B cell (primary cell): ENCODE measurements at regions of chr3 and their contacts with region 1.

Region 1: GRCh38 chr3:16290007-16290826 is 25.2 kb downstream of the OXNAD1 start:
- DNase-seq: peak; percentile 69
- ATAC-seq: peak; percentile 63
- H3K4me3 ChIP-seq: no peak overlapping the region
- H3K4me3 Mint-ChIP-seq: no peak overlapping the region
- H3K27ac ChIP-seq: peak overlapping the region in 1 of 2 donors; percentile 39
- H3K27ac Mint-ChIP-seq: no peak overlapping the region
- H3K4me1 ChIP-seq: peaks cover 23 to 29% of the 10 kb centered on the region in 2 donors
- H3K4me1 Mint-ChIP-seq: peaks cover 34% of the 10 kb centered on the region
- H3K27me3 ChIP-seq: no peaks in the 10 kb centered on the region
- H3K27me3 Mint-ChIP-seq: no peaks in the 10 kb centered on the region
- CTCF ChIP-seq: peak; percentile 96

Region 2: DNA sequence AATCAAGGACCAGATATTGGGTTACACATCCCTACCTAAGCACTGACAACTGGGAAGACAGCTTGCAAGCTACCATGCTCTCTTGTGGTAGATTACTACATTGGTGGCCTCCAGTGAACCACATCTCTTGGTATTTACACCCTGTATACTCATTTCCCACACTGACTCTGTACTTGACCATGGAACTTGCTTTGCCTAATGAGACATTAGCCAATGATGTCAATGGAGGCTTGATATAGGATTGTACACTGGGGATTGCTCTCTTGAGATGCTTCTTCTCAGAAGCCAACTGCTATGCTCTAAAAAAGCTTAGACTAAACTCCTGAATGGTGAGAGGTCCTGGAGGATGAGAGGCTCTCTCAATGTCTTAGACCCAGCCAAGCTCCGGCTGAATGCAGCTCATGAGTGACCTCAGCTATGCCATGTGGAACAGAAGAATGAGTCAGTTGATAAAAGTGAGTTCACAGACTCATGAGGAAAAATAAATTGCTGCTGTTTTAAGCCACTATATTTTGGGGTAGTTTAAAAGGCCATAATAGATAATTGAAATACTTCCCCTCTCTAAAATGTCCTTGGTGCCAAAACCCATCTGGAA is 177.2 kb before region 1 on chr3:
- CTCF ChIA-PET with region 1: no interaction called
- POLR2A ChIA-PET with region 1: no interaction called
- intact Hi-C with region 1: no loop called
- DNase-seq: no peak
- ATAC-seq: no peak
- H3K4me3 ChIP-seq: no peak overlapping the region
- H3K4me3 Mint-ChIP-seq: no peak overlapping the region
- H3K27ac ChIP-seq: no peak overlapping the region
- H3K27ac Mint-ChIP-seq: no peak overlapping the region
- H3K4me1 ChIP-seq: no peaks in the 10 kb centered on the region
- H3K4me1 Mint-ChIP-seq: no peaks in the 10 kb centered on the region
- H3K27me3 ChIP-seq: no peaks in the 10 kb centered on the region
- H3K27me3 Mint-ChIP-seq: peaks cover 3% of the 10 kb centered on the region
- CTCF ChIP-seq: no peak

Region 3: DNA sequence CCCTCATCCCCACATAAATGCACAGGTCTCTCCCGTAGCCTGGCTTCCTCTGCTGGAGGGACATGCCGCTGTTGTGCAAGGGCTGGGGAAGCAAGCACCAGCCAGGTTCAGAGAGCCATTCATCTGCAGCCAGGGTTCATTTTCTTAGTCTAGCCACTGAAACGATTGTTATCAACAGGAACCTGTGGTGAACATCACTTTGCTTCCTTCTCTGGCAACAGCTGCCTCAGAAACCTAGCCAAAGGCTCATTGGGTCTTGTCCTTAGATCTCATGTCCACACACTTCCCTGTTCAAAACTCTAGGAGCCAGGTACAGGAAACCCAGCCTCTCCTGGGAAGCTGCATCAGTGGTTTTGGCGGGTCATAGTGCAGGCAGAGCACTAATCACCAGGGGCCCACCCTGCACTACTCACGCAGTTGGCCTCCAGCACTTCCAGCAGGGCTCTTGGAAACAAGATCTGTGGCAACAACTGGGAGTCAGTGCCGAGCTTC is 21.8 kb after region 1 on chr3:
- CTCF ChIA-PET with region 1: interaction called, 26 read pairs
- POLR2A ChIA-PET with region 1: no interaction called
- intact Hi-C with region 1: no loop called
- DNase-seq: peak; percentile 61
- ATAC-seq: peak; percentile 68
- H3K4me3 ChIP-seq: no peak overlapping the region
- H3K4me3 Mint-ChIP-seq: peak overlapping the region; percentile 42
- H3K27ac ChIP-seq: peak overlapping the region; percentile 51 to 68
- H3K27ac Mint-ChIP-seq: peak overlapping the region; percentile 88
- H3K4me1 ChIP-seq: peaks cover 14 to 18% of the 10 kb centered on the region in 2 donors
- H3K4me1 Mint-ChIP-seq: peaks cover 22% of the 10 kb centered on the region
- H3K27me3 ChIP-seq: no peaks in the 10 kb centered on the region
- H3K27me3 Mint-ChIP-seq: no peaks in the 10 kb centered on the region
- CTCF ChIP-seq: no peak

Region 4: GRCh38 chr3:16433701-16434151 is 143.5 kb after region 1 on chr3:
- CTCF ChIA-PET with region 1: interaction called, 3 read pairs
- POLR2A ChIA-PET with region 1: no interaction called
- intact Hi-C with region 1: loop called (anchors 5 kb)
- DNase-seq: peak; percentile 84
- ATAC-seq: peak; percentile 70
- H3K4me3 ChIP-seq: no peak overlapping the region
- H3K4me3 Mint-ChIP-seq: peak overlapping the region; percentile 84
- H3K27ac ChIP-seq: peak overlapping the region in 1 of 2 donors; percentile 3
- H3K27ac Mint-ChIP-seq: peak overlapping the region; percentile 85
- H3K4me1 ChIP-seq: peaks cover 45 to 51% of the 10 kb centered on the region in 2 donors
- H3K4me1 Mint-ChIP-seq: peaks cover 56% of the 10 kb centered on the region
- H3K27me3 ChIP-seq: peaks cover 0 to 5% (median 0%) of the 10 kb centered on the region in 4 experiments
- H3K27me3 Mint-ChIP-seq: peaks cover 6% of the 10 kb centered on the region
- CTCF ChIP-seq: no peak

Region 5: GRCh38 chr3:16523778-16524177 is 233.6 kb after region 1 on chr3:
- CTCF ChIA-PET with region 1: interaction called, 70 read pairs
- POLR2A ChIA-PET with region 1: no interaction called
- intact Hi-C with region 1: no loop called
- DNase-seq: no peak
- ATAC-seq: no peak
- H3K4me3 ChIP-seq: no peak overlapping the region
- H3K4me3 Mint-ChIP-seq: no peak overlapping the region
- H3K27ac ChIP-seq: no peak overlapping the region
- H3K27ac Mint-ChIP-seq: no peak overlapping the region
- H3K4me1 ChIP-seq: peaks cover 53 to 59% of the 10 kb centered on the region in 2 donors
- H3K4me1 Mint-ChIP-seq: peaks cover 55% of the 10 kb centered on the region
- H3K27me3 ChIP-seq: no peaks in the 10 kb centered on the region
- H3K27me3 Mint-ChIP-seq: no peaks in the 10 kb centered on the region
- CTCF ChIP-seq: no peak

Region 6: GRCh38 chr3:16545413-16546185 is 255.4 kb after region 1 on chr3:
- CTCF ChIA-PET with region 1: interaction called, 220 read pairs
- POLR2A ChIA-PET with region 1: interaction called, 4 read pairs
- intact Hi-C with region 1: loop called (anchors 1 kb)
- DNase-seq: no peak
- ATAC-seq: no peak
- H3K4me3 ChIP-seq: no peak overlapping the region
- H3K4me3 Mint-ChIP-seq: no peak overlapping the region
- H3K27ac ChIP-seq: no peak overlapping the region
- H3K27ac Mint-ChIP-seq: no peak overlapping the region
- H3K4me1 ChIP-seq: peaks cover 0 to 2% of the 10 kb centered on the region in 2 donors
- H3K4me1 Mint-ChIP-seq: no peaks in the 10 kb centered on the region
- H3K27me3 ChIP-seq: peaks cover 0 to 6% (median 1%) of the 10 kb centered on the region in 4 experiments
- H3K27me3 Mint-ChIP-seq: no peaks in the 10 kb centered on the region
- CTCF ChIP-seq: no peak